ENCODE measurements at regions of chr16 and their contacts with region 1.

Region 1: DNA sequence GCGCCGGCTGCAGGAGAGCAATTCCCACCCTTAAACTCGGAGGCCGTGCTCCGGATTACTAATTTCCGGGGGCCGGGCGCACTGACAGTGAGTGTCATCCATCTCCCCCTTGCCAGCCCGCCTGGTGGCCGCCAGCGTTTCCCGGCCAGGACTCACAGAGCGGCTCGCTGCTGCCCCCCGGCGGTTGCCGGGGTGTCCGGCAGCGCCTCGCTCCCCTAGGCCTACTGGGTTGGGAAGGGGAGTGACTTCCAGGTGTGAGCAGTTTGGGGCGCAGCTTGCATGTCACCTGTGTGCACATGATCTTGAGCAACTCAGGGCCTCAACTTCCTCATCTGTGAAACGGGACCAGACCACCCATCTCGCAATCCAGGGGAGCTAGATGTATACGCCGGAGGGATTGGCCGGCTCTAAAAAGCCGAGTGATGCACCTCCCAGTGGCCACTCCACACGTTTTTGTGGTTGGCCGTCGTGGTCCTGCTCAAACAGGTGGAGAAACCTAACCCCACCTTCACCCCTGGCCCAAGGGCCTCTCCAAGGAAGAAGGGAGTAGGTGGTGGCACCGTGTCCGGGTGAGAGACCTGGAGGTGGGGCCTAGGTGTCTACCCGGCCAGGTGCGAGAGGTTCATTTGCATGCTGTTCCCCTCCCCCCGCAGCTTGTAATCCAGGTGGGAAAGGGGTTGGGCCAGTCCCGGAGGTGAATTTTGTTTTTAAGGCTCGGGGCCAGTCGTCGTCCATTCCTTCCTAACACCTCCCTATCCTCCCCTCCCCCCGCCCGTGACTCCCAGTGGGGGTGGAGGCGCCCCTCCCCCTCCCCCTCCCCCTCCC is 2.4 kb upstream of the GSE1 start:
- DNase-seq: peak; percentile 93
- ATAC-seq: peak; percentile 76

Region 2: DNA sequence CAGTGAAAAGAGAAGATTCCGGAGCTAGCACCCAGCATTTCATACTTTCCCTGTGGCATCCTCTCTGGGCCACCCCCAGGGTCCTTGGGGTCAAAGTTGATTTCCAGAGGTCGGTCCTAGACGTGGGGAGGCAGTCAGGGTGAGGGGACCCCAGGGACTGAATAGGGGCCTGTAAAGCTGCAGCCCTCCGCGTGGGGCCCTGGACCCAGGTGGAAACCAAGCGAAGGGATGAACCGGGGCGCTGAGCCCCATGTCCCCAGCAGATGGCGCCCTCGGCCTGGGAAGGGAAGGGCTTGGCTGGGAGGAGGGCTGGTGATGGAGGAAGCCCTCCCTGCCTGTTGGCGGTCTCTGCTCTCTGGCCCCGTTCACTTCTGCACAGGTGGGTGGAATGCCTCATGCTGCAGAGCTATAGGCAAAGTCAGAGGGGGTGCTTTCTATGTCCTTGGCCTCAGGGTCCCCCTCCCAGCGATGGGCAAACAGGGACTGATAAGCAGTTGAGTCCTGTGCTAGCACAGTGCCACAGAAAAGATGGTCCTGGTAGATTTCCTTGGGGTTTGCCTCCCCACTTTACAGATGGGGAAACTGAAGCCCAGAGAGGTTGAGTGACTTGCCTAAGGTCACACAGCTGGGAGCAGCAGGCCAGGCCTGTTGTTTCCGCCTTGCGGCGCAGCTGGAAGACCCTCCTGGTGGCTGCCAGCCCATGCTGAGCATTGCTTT is 335.0 kb before region 1 on chr16:
- intact Hi-C with region 1: loop called (anchors 10 kb)
- DNase-seq: peak; percentile 89
- ATAC-seq: peak; percentile 73

Region 3: GRCh38 chr16:85305996-85306792 is 304.5 kb before region 1 on chr16:
- intact Hi-C with region 1: loop called (anchors 10 kb)
- DNase-seq: peak; percentile 94
- ATAC-seq: peak; percentile 79

Region 4: DNA sequence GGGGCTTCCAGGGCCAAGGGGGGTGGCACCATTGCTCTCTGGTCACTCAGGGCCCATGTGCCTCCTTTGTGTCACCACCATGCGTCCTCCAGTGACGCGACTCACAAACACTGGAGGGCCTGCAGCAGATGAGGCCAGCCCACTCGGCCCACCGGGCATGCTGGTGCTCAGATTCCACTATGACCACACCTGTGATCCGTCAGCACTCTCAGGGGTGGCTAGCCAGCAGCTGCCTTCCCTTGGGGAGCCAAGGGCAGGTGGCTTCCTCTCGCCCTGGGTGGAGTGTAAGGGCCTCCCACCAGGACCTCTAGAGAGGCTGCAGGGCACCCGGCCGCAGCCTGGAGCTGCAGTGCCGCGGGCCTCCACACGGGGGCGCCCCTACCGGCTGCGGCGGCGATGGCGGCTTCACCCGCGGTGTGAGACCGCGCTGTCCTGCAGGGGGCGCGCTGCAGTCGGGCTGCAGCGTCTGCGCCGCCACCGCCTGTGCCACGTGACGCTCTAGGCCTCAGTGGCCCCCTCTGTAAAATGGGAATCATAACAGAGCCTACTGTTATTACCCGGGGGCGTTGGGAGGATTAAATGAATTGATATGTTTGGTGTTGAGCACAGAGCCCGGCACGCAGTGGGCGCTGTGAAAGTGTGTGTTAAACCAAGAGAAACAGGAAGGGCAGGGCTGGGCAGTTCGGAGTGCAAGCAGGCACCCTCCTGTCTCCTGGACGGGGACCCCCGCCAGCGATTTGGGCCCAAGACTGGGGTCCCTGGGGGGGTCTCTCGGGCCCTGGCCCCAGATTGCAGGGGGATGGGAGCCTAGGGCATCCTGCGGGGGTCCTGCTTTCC is 190.0 kb before region 1 on chr16:
- intact Hi-C with region 1: loop called (anchors 10 kb)
- DNase-seq: peak; percentile 69
- ATAC-seq: no peak

Region 5: DNA sequence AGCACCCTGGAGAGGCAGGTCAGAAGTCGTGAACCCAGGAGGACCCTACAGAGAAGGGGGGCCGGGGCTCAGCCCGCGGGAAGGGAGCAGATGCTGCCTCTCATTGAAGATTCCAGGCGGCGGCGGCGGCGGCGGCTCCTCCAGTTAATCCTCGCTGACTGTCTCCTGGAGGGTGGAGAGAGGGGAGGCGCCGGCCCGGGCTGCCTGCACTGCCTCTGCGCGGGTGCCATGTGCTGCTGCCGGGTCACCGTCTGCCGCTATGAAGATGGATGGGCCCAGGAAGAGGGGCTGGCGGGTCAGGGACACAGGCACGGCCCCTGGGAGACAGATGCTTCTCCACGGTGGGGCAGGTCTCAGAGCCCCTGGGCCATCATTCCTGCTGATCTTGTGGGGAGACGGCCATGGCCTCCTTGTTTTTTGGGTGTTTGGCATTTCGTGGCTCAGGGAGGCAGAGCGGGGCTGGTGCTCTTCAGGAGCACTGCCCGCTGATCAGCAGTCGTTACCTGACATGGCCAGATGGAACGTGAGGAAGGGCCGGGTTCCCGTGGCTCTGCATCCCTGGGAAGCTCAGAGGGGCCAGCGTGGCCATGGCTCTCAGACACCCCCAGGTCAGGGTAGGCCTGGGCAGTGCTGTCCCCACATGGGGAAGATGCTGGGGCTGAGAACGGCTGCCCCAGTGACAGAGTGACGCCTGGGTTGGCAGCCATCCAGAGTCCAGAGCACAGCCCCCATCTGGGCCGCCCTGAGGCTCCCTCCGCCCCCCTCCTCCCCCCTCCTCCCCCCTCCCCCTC is 41.9 kb after region 1 on chr16:
- intact Hi-C with region 1: no loop called
- DNase-seq: peak; percentile 84
- ATAC-seq: peak; percentile 73

Measured in sciatic nerve (tissue), 2 donors.